ENCODE measurements at regions of chr16 and their contacts with region 1.

Region 1: GRCh38 chr16:75764154-75764768 is 38.0 kb upstream of the CPHXL start:
- DNase-seq: peak; percentile 65
- CTCF ChIP-seq: peak; percentile 85

Region 2: DNA sequence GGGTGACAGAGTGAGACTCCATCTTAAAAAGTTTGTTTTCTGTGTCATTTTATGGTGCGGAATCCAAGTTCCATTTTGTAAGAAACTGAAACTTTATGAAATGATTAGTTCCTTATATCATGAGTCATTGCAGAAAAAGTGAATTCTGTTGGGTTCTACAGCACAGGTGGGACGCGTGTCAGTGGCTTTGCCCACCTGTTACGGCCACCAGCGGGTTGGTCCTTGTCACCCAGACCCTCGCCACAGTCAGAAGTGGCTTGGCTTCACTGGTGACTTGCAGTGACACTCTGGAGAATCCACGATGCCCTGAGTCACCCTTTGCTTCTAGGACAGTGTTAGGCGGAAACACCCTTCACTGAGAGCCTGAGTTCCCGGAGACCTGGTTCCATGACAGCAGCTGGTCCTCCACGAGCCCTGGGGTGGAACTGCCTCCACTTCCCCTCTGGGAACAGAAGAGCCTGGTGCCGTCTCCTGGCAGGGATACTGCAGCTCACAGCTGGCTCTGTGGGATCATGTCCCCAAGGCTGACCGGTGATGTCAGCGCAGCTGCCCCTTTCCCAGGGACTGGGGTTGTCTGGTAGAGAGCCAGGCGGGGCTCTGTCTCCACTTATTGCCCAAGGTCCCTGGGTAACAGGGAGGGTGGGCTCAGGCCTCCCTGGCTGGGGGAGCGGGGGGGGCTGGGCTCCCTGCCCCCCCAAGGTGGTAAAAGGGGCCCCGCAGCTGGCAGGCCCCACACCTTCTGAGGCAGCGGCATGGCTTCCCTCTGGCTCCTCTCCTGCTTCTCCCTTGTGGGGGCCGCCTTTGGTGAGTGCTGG is 545.8 kb before region 1 on chr16 and contains the start of gene CTRB1:
- in situ Hi-C with region 1: loop called (anchors 25 kb)
- DNase-seq: peak; percentile 68
- CTCF ChIP-seq: no peak

Region 3: GRCh38 chr16:75464130-75464918 is 299.9 kb before region 1 on chr16 and contains the start of gene TMEM170A:
- in situ Hi-C with region 1: loop called (anchors 25 kb)
- DNase-seq: peak; percentile 97
- CTCF ChIP-seq: peak; percentile 99

Region 4: DNA sequence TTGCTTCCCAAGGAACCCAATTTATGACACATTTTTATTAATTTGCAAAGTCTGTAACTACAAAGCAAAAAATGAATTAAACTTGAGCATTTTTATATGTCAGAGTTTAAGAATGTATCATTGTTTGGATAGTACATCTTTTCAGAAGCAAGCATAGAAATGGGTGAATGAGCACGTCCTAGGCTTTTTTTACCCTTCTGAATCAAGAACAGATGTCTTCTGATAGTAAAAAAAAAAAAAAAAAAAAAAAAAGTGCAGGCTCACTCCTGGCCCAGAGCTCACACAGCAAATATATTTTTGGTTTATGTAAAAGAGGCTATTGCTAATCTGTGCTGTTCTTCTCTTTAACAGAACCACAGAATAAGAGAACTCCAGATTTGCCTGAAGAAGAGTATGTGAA is 110.3 kb before region 1 on chr16:
- in situ Hi-C with region 1: loop called (anchors 25 kb)
- DNase-seq: no peak
- CTCF ChIP-seq: no peak